ENCODE measurements at regions of chr9 and their contacts with region 1.

Region 1: GRCh38 chr9:113657703-113658544 is 194.4 kb downstream of the RGS3 start:
- DNase-seq: no peak
- H3K4me3 ChIP-seq: no peak overlapping the region
- H3K27me3 ChIP-seq: peaks cover 3% of the 10 kb centered on the region; the same call in 1 of the 2 replicates
- CTCF ChIP-seq: peak; percentile 96

Region 2: DNA sequence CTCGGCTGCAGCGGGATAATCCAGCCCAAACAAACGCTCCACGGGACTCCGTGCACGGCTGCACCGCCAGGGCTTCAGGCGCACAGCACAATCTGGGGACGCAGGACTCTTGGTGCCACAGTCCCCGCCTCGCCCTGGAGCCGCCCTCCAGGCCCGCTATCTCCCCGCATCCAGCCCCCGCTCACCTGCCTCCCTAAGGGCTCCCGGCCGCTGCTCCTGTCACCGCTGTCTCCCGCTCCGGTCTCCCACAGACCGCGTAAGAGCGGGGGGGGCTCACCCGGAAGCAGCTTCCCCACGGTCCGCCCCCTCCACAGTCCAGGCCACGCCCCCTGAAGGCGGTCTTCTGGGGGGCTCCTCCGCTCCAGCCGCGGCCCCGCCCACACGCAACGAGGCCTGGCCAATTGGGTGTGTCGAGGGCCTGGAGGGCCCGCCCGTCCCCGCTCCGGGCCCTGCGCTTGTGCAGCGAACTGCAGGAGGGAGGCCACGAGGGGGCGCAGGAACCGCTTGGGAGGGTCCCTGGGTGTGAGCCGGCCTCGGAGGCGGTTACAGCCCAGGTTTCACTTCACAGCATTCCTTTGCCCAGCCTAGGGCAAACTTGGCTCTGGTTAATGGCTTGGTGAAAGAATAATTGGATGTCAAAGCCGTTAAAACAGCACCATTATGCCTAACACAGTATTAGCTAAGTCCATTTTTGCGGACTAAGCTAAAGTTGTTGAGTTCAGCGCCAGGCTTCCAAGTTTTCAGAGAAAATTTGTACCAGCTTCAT is 256.7 kb before region 1 on chr9 and contains the start of gene ALAD:
- CTCF ChIA-PET with region 1: interaction called, 20 read pairs
- POLR2A ChIA-PET with region 1: no interaction called
- DNase-seq: peak; percentile 87
- H3K4me3 ChIP-seq: peak within 1 kb of the TSS; percentile 76
- H3K27me3 ChIP-seq: no peaks in the 10 kb centered on the region
- CTCF ChIP-seq: peak; percentile 95
- polyA plus RNA-seq, gene ALAD: 9.2 and 9.5 TPM in 2 replicates

Region 3: GRCh38 chr9:113454914-113455761 is 202.8 kb before region 1 on chr9:
- CTCF ChIA-PET with region 1: interaction called, 157 read pairs
- POLR2A ChIA-PET with region 1: no interaction called
- DNase-seq: peak; percentile 59
- H3K4me3 ChIP-seq: no peak overlapping the region
- H3K27me3 ChIP-seq: no peaks in the 10 kb centered on the region
- CTCF ChIP-seq: no peak

Region 4: GRCh38 chr9:113591001-113591898 is 66.7 kb before region 1 on chr9:
- CTCF ChIA-PET with region 1: interaction called, 1,084 read pairs
- POLR2A ChIA-PET with region 1: interaction called, 5 read pairs
- DNase-seq: no peak
- H3K4me3 ChIP-seq: no peak overlapping the region
- H3K27me3 ChIP-seq: no peaks in the 10 kb centered on the region
- CTCF ChIP-seq: peak; percentile 91

Region 5: GRCh38 chr9:113614843-113615648 is 42.9 kb before region 1 on chr9:
- CTCF ChIA-PET with region 1: interaction called, 10 read pairs
- POLR2A ChIA-PET with region 1: no interaction called
- DNase-seq: peak; percentile 66
- H3K4me3 ChIP-seq: no peak overlapping the region
- H3K27me3 ChIP-seq: no peaks in the 10 kb centered on the region
- CTCF ChIP-seq: no peak

Region 6: DNA sequence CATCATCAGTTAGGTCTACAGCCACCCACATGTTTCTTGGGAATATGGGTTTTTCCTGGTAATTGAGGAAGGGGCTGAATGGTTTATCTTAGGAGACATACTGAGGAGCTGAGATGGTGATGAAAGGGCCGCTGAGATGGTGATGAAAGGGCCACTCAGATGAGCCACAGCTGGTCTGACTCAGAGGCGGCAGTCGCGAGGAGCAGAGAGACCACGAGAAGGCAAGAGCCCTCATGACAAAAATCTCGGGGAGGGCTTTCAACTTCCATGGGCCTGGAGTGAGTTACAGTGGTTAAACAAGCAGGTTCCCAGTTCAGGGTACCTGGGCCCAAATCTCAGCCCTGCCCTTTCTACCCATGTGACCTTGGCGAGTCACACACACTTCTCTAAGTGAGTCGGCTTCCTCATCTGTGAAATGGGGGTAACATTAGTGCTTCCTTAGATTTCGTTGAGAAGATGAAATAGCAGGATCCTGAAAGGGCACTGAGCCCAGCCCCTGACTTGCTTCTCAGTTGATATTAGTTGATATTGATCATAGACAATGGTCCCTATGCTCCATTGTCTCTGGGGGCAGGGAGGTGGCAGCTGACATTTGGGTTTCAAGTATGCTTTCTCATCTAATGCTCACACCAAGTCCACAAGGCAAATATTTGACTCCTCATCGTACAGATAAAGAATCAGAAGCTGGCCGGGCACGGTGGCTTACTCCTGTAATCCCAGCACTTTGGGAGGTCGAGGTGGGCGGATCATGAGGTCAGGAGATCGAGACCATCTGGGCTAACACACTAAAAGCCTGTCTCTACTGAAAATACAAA is 24.9 kb before region 1 on chr9:
- CTCF ChIA-PET with region 1: interaction called, 19 read pairs
- POLR2A ChIA-PET with region 1: no interaction called
- DNase-seq: no peak
- H3K4me3 ChIP-seq: no peak overlapping the region
- H3K27me3 ChIP-seq: peaks cover 13% of the 10 kb centered on the region
- CTCF ChIP-seq: no peak

Region 7: GRCh38 chr9:113669522-113670115 is 11.7 kb after region 1 on chr9:
- CTCF ChIA-PET with region 1: interaction called, 41 read pairs
- POLR2A ChIA-PET with region 1: no interaction called
- DNase-seq: peak; percentile 51
- H3K4me3 ChIP-seq: no peak overlapping the region
- H3K27me3 ChIP-seq: no peaks in the 10 kb centered on the region
- CTCF ChIP-seq: no peak

Region 8: GRCh38 chr9:113807173-113808061 is 149.5 kb after region 1 on chr9:
- CTCF ChIA-PET with region 1: no interaction called
- POLR2A ChIA-PET with region 1: no interaction called
- DNase-seq: no peak
- H3K4me3 ChIP-seq: 0 out of 2 replicates have a peak overlapping the region, but pooled peaks have one; percentile 2
- H3K27me3 ChIP-seq: peaks cover 3% of the 10 kb centered on the region
- CTCF ChIP-seq: peak; percentile 89